Activated T-helper 2 cell treated with anti-CD3 and anti-CD28 coated beads, Interferon-gamma antibody, Interleukin-2, Interleukin-4, amounts not matched to agents 10 μg/mL and 5 μg/mL and 100 μg/mL, durations not matched to agents 14 hours and 24 hours and 36 hours (primary cell): ENCODE measurements at regions of chr12 and their contacts with region 1.

Region 1: DNA sequence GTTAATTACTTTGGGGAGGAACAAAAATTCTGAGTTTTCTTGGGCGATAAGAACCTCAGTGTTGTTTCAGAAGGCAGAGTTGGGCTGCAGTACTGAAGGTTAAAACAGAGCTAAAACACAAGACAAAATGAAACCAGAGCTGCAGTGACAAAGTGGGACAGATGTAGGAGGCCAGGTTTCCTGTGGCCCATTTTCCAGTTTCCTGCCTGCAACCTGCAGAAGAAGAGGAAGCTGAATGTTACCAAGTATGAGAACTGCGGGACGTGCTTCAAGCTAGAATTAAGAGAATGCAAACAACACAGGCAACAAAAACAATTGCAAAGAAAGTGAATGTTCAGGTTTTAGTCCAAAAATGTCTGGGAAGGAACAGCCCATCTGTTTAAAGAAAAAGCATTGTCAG is 17.8 kb downstream of the ELK3 start:
- DNase-seq: no peak
- H3K4me3 Mint-ChIP-seq: peak overlapping the region; percentile 10
- H3K27ac Mint-ChIP-seq: peak overlapping the region; percentile 48
- H3K4me1 Mint-ChIP-seq: peaks cover 72% of the 10 kb centered on the region
- H3K27me3 Mint-ChIP-seq: no peaks in the 10 kb centered on the region

Region 2: DNA sequence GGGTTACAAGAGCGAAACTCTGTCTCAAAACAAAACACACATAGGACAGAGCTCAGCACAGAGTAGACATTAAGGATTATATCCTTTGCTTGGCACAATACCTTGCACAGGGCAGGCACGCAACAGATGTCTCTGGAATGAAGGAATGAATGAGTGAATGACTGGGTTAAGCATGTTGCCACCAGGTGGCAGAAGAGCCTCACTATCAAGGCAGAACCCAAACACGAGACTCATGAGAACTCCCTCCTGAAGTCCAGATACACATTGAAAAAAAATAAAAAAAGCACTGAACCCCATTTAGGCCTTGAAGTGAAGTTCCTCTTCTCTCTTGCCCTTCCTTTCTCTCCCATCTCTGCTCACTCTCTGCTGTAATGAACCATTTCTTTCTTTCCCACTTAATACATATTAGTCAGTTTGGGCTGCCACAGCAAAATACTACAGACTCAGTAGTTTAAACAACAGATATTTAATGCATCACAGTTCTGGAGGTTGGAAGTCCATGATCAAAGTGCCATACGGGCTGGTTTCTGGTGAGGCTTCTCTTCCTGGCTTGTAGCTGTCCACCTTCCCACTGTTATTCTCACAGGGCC is 150.0 kb before region 1 on chr12:
- intact Hi-C with region 1: loop called (anchors 1 kb)
- DNase-seq: peak; percentile 60
- H3K4me3 Mint-ChIP-seq: no peak overlapping the region
- H3K27ac Mint-ChIP-seq: no peak overlapping the region
- H3K4me1 Mint-ChIP-seq: peaks cover 22% of the 10 kb centered on the region
- H3K27me3 Mint-ChIP-seq: no peaks in the 10 kb centered on the region

Region 3: DNA sequence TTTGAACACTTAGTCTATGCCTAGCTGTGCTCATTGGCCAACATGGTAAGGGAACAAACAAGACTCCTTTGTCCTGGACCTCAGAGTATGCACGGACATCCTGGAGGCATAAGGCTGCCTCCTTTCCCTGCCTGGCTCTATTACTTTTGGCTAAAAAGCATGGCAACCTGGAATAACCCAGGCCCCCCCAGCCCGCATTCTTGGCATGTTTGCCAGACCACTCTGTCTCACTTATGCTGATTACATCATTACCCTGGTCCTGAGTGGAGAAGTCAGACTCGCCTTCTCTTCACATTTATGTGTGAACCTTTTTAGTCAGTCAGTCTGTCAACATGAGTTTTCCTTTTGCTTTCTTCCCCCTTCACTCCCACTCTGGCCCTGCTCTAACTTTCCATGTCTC is 75.8 kb before region 1 on chr12:
- intact Hi-C with region 1: loop called (anchors 5 kb)
- DNase-seq: no peak
- H3K4me3 Mint-ChIP-seq: no peak overlapping the region
- H3K27ac Mint-ChIP-seq: no peak overlapping the region
- H3K4me1 Mint-ChIP-seq: peaks cover 23% of the 10 kb centered on the region
- H3K27me3 Mint-ChIP-seq: peaks cover 4% of the 10 kb centered on the region

Region 4: GRCh38 chr12:96177013-96177412 is 35.0 kb before region 1 on chr12:
- intact Hi-C with region 1: loop called (anchors 2 kb)
- DNase-seq: peak; percentile 60
- H3K4me3 Mint-ChIP-seq: peak overlapping the region; percentile 11
- H3K27ac Mint-ChIP-seq: peak overlapping the region; percentile 53
- H3K4me1 Mint-ChIP-seq: peaks cover 18% of the 10 kb centered on the region
- H3K27me3 Mint-ChIP-seq: no peaks in the 10 kb centered on the region

Region 5: GRCh38 chr12:96237465-96238077 is 25.6 kb after region 1 on chr12:
- intact Hi-C with region 1: loop called (anchors 2 kb)
- DNase-seq: peak; percentile 25
- H3K4me3 Mint-ChIP-seq: peak overlapping the region; percentile 34
- H3K27ac Mint-ChIP-seq: peak overlapping the region; percentile 27
- H3K4me1 Mint-ChIP-seq: peaks cover 48% of the 10 kb centered on the region
- H3K27me3 Mint-ChIP-seq: no peaks in the 10 kb centered on the region